Mammary epithelial cell (primary cell): ENCODE measurements at regions of chr12 and their contacts with region 1.

Region 1: DNA sequence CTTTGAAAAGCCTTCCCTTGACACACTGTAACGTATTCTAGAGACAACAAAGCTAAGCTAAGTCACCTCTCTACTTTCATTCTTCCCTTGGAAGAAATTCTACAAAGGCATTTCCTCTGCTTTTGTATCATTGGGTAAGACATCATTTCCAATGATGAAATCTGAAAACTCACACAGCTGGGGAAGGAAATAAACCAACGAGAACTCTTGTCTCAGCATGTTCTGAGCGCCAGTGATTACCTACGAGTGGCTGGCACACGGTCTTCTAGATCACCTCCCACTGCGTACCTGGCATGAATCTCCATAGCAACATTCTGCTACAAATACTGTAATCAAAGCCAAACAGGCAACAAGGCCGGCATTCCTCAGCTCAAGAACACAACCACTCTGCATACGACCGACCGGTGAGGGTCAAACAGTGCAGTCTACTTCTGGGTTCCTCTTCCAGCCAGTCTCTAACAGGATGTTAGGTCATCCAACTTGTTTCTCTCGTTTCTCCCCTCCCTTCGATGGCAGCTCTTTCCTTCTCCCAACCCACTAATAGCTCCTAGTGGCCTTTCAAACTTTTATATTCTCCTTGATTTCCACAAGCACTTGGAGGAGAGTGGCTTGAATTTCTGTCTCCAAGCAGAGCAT is 7.6 kb downstream of the VPS37B start:
- DNase-seq: peak; percentile 100
- H3K4me3 ChIP-seq: peak overlapping the region; percentile 33 to 40 (median 37)
- H3K27ac ChIP-seq: peak overlapping the region; percentile 99
- H3K4me1 ChIP-seq: peaks cover 83% of the 10 kb centered on the region
- H3K27me3 ChIP-seq: no peaks in the 10 kb centered on the region
- CTCF ChIP-seq: no peak

Region 2: DNA sequence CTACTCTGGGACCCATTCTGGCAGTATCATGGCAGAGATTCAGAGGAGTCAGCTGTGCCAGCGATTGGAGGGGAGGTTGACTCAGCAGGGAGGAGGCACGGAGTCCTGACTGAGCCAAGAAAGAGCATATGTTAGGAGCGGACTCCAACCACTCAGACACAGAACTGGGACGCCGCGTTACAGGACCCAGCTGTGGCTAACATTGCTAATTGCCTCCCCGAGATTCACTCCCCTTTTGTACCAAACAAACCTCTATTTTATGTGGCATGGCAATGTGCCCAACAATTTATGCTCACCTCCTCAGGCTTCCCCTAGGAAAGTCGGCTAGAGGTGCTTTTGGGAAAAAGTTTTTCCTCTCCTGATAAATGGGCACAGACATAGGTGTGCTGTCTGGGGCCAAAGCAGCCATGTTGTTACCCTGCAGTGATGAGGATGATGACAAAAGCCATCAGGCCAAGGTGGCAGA is 450.7 kb before region 1 on chr12:
- CTCF ChIA-PET with region 1: no interaction called
- dilution Hi-C with region 1: no loop called
- in situ Hi-C with region 1: no loop called
- intact Hi-C with region 1: no loop called
- DNase-seq: peak; percentile 74
- H3K4me3 ChIP-seq: peak overlapping the region in 1 of 3 experiments; percentile 3
- H3K27ac ChIP-seq: no peak overlapping the region
- H3K4me1 ChIP-seq: peaks cover 4% of the 10 kb centered on the region
- H3K27me3 ChIP-seq: no peaks in the 10 kb centered on the region
- CTCF ChIP-seq: no peak

Region 3: DNA sequence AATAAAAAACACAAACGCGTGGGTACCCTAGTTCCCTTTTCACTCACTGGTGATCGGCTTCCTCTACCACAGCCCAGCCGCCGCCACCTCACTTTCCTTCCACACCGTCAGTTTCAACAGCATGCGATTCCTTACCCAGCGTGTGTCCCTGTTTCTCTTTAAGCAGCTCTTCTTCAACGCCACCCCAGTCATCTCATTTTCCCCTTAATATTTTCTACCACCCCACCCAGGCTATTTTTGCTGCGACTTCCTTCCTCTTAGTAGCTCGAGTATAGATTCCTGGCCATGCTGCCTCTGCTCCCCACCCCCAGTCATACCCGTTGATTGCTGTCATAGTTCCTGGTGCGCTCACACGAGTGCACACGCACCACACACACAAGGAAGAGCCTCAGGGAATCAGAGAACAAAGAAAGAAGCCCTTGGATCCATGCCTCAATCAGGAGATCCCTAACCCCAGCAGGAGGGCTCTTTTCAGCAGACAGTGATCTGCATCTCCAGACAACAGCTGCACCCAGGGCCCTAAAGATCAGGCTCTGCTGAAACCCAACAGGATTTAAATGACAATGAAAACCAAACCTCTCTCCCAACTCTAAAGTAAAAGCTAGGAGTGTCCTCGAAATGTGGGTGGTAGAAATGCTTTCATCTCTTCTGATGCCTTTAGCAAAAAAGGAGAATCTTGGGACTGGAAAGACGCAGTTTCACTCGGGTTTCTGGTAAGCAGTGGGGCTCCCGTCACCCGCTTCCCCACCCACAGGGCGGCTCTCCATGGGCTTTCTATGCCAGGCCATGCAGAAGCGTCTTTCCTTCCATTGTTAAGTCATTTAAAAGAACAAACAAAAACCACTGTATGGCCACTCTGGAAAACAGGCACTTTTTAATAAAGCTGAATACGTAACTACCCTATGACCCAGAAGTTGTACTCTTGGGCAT is 16.2 kb before region 1 on chr12:
- CTCF ChIA-PET with region 1: no interaction called
- dilution Hi-C with region 1: no loop called
- in situ Hi-C with region 1: no loop called
- intact Hi-C with region 1: loop called (anchors 2 kb)
- DNase-seq: peak; percentile 70
- H3K4me3 ChIP-seq: no peak overlapping the region
- H3K27ac ChIP-seq: peak overlapping the region; percentile 43
- H3K4me1 ChIP-seq: peaks cover 49% of the 10 kb centered on the region
- H3K27me3 ChIP-seq: no peaks in the 10 kb centered on the region
- CTCF ChIP-seq: no peak

Region 4: DNA sequence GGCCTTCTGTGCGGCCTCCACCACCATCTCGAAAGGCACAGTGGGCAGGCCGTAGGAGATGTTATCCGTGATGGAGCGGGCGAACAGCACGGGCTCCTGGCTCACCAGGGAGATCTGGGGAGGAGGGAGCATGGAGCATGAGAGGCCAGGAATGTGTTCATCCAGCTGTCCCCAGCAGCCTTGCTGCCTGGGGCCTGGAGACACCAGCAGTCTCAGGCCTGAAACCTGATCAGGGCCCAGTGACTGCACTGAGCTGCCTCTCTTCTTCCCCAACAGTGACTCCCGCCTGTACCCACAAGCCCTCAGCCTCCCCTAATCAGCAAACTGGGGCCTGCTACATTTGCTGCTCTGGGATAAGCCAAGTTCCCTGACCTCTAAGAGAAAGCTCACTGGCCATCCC is 47.0 kb after region 1 on chr12:
- CTCF ChIA-PET with region 1: no interaction called
- dilution Hi-C with region 1: no loop called
- in situ Hi-C with region 1: no loop called
- intact Hi-C with region 1: no loop called
- DNase-seq: no peak
- H3K4me3 ChIP-seq: no peak overlapping the region
- H3K27ac ChIP-seq: no peak overlapping the region
- H3K4me1 ChIP-seq: no peaks in the 10 kb centered on the region
- H3K27me3 ChIP-seq: no peaks in the 10 kb centered on the region
- CTCF ChIP-seq: no peak